ENCODE measurements at regions of chr1 and their contacts with region 1.

Region 1: DNA sequence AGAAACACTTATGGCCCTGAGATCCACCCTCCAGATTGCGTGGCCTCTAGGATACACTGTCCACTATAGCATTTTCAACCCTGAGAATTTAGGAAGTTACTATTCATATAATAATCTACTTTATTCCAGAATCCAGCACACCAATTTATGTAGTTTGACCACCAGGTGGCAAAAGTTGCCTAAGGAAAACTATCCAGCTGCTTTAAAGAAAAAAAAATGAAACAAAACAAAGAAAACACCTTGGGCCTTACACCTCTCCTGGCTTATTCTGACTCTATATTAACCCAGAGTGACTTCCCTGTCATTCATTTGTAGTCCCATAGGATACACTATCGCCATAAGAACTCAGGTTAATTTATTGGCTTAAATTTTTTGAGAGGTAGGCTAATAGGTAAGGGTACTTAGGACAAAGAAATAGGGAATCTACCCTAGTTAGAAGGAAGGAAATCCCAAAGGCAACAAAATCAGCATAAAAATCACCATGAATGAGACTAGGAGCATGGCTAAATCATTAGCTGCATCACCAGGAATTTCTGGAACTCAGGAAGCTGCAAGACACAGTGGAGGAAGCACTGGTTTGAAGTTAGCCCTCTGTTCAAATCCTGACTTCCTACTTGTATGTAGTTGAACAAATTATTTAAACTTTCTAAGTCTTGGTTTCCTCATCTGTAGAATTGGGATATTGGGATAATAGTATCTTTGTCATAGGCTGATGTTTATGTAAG is 107.5 kb downstream of the SPAG17 start:
- DNase-seq: peak in 1 of 2 experiments; percentile 2
- H3K4me3 ChIP-seq: no peak overlapping the region
- H3K27ac ChIP-seq: no peak overlapping the region
- H3K4me1 ChIP-seq: no peaks in the 10 kb centered on the region; the same call in 1 of the 2 replicates
- H3K27me3 ChIP-seq: no peaks in the 10 kb centered on the region
- CTCF ChIP-seq: peak; percentile 89

Region 2: DNA sequence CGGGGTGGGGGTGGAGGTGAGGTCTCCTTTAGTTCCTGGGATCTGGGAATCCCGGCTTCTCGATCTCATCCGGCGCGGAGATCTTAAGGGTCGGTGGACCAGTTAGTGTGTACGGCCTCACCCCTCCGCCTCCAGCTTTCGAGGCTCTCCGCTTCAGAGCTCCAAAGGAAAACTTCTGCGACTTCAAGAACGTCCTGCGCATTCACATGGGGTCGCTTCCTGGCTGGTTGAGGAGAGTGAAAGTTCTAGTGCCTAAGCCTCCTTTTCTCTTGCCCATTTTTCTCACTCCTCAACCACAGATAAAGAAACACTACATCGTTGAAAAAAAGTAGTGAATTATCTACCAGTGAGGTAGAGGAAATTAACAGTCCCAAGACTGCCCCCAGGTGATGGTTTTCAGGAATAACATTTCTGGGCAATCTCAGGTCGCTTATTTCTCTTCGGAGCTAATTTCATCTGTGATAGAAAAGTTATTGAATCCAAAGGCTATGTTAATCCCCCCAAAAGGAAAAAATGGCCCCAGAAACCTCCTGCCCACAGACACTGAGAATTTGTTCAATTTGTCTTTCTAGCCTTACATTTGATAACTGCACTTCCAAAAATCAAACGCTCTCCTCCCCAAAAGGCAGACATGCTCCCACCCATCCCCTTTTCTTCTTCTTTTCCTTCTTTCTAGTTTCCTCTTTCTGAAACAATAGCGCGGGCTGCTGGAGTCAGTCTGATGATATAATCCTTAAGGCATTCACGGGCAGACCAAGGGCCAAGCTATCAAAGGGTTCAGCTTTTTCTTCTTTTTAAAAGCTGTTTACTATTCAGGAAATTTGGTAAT is 931.2 kb after region 1 on chr1:
- CTCF ChIA-PET with region 1: no interaction called
- POLR2A ChIA-PET with region 1: no interaction called
- intact Hi-C with region 1: loop called (anchors 2 kb)
- DNase-seq: peak in 1 of 2 experiments; percentile 20
- H3K4me3 ChIP-seq: no peak overlapping the region
- H3K27ac ChIP-seq: no peak overlapping the region
- H3K4me1 ChIP-seq: no peaks in the 10 kb centered on the region
- H3K27me3 ChIP-seq: no peaks in the 10 kb centered on the region
- CTCF ChIP-seq: peak; percentile 85

Region 3: GRCh38 chr1:119367427-119368124 is 1290.1 kb after region 1 on chr1:
- CTCF ChIA-PET with region 1: no interaction called
- POLR2A ChIA-PET with region 1: no interaction called
- intact Hi-C with region 1: loop called (anchors 2 kb)
- DNase-seq: no peak
- H3K4me3 ChIP-seq: no peak overlapping the region
- H3K27ac ChIP-seq: no peak overlapping the region
- H3K4me1 ChIP-seq: peaks cover 3% of the 10 kb centered on the region; the same call in 1 of the 2 replicates
- H3K27me3 ChIP-seq: no peaks in the 10 kb centered on the region
- CTCF ChIP-seq: peak; percentile 99